Activated CD4-positive, alpha-beta T cell treated with anti-CD3 and anti-CD28 coated beads, Interleukin-2, amount 10 ng/mL, durations not matched to agents 24 days and 14 days (primary cell): ENCODE measurements at regions of chr1 and their contacts with region 1.

Region 1: GRCh38 chr1:246002725-246003441 is 504.2 kb downstream of the SMYD3 start:
- DNase-seq: peak; percentile 93
- H3K4me3 Mint-ChIP-seq: no peak overlapping the region
- H3K27ac Mint-ChIP-seq: no peak overlapping the region
- H3K4me1 Mint-ChIP-seq: no peaks in the 10 kb centered on the region
- H3K27me3 Mint-ChIP-seq: no peaks in the 10 kb centered on the region

Region 2: GRCh38 chr1:245888809-245889208 is 114.1 kb before region 1 on chr1:
- intact Hi-C with region 1: loop called (anchors 1 kb)
- DNase-seq: peak; percentile 70
- H3K4me3 Mint-ChIP-seq: no peak overlapping the region
- H3K27ac Mint-ChIP-seq: no peak overlapping the region
- H3K4me1 Mint-ChIP-seq: no peaks in the 10 kb centered on the region
- H3K27me3 Mint-ChIP-seq: no peaks in the 10 kb centered on the region